ENCODE measurements at regions of chr1 and their contacts with region 1.

Region 1: DNA sequence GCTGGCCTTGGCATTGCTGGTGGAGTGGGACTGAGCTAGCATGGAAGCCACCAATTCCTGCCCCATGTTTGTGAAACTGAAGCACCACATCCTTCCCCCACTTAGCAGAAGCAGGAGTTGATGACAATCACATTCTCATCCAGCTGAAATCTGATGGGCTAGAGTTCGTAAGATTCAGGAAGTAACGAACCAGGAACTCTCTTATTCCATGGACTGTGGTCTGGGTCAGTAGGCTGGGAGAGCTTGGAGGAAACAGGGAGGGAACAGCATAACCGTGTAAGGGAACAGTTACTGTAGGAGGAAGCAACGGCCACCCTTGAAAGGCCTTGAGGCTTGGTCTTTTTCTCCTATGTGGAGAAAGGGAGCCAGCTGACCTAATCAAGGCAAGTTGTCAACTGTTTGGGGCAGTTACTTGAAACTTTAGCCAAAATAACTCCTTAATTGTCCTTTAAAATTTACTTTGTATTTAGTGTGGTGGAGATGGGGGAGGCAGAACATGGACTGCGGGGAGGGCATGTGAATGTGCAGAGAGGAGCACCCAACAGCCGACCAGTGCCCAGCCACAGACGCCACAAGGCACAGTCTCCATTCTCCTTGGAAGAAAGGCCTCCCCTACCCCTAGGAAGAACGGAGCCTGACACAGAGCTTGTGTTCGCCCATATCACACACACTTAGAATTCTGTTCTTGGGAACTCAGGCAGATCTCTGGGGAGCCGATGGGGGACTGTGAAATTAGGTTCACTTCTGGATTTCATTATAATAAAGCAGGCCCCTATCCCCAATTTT is 2.0 kb upstream of the COQ8A start:
- DNase-seq: no peak
- H3K4me3 ChIP-seq: no peak overlapping the region
- H3K27ac ChIP-seq: peak overlapping the region; percentile 70 to 99
- H3K4me1 ChIP-seq: peaks cover 13% of the 10 kb centered on the region
- H3K27me3 ChIP-seq: no peaks in the 10 kb centered on the region
- CTCF ChIP-seq: no peak
- EP300 ChIP-seq: no peak
- POLR2A ChIP-seq: no peak

Region 2: GRCh38 chr1:226953175-226953800 is 15.2 kb after region 1 on chr1:
- intact Hi-C with region 1: loop called in 1 of 4 experiments (anchors 1 kb)
- DNase-seq: no peak
- H3K4me3 ChIP-seq: no peak overlapping the region
- H3K27ac ChIP-seq: peak overlapping the region in 1 of 2 donors; percentile 2
- H3K4me1 ChIP-seq: peaks cover 19% of the 10 kb centered on the region
- H3K27me3 ChIP-seq: no peaks in the 10 kb centered on the region
- CTCF ChIP-seq: no peak
- EP300 ChIP-seq: no peak
- POLR2A ChIP-seq: no peak

Region 3: DNA sequence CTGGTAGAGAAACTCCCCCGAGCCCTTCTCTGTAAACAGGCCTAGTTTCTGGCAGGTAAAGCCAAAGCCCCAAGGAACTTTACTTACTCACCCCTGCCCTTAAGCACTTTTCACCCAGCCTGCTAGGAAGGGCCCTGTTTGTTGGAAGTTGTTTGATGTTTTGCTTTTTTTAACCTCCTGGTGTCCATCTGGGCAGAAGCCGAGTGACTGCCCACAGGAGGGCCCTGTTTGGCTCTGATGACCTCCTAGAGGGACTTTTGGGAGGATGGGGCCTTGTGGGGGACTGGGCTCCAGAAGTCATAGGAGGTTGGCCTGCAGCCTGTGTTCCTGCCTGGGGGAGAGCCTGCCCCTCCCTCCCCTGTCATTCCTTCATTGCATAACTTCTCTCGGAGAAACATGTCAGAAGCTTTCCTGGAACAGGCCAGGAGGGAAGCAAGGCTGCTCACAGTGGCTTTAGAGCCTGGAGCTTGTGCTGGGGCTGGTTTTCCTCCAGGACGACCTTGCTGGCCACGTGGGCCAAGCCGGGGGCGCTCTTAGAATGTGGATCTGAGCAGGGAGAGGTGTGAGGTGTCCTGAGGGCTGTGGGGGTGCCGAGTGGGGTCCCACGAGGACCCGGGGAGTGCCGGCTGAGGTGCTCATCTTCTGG is 35.9 kb after region 1 on chr1:
- intact Hi-C with region 1: no loop called
- DNase-seq: peak; percentile 75 to 88 (median 84)
- H3K4me3 ChIP-seq: no peak overlapping the region
- H3K27ac ChIP-seq: peak overlapping the region; percentile 23 to 93
- H3K4me1 ChIP-seq: peaks cover 23% of the 10 kb centered on the region
- H3K27me3 ChIP-seq: no peaks in the 10 kb centered on the region
- CTCF ChIP-seq: peak in 2 of 3 donors; percentile 29 to 30
- EP300 ChIP-seq: peak; percentile 91
- POLR2A ChIP-seq: peak; percentile 38

Region 4: DNA sequence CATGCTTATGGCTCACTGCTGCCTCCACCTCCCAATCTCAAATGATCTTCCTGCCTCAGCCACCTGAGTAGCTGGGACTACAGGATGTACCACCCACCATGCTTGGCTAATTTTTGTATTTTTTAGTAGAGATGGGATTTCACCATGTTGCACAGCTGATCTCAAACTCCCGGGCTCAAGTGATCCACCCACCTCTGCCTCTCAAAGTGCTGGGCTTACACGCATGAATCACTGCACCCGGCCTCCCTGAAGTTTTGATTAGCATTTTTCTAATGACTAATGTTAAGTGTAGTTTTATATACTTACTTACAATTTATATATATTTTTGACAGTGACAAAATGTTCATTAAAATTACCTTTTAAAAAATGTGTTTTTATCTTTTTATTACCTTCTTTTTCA is 666.3 kb after region 1 on chr1:
- intact Hi-C with region 1: no loop called
- DNase-seq: no peak
- H3K4me3 ChIP-seq: no peak overlapping the region
- H3K27ac ChIP-seq: no peak overlapping the region
- H3K4me1 ChIP-seq: peaks cover 2% of the 10 kb centered on the region
- H3K27me3 ChIP-seq: no peaks in the 10 kb centered on the region
- CTCF ChIP-seq: no peak
- EP300 ChIP-seq: no peak
- POLR2A ChIP-seq: no peak

Measured in ovary (tissue), 10 donors.